ENCODE measurements at regions of chr4 and their contacts with region 1.

Region 1: DNA sequence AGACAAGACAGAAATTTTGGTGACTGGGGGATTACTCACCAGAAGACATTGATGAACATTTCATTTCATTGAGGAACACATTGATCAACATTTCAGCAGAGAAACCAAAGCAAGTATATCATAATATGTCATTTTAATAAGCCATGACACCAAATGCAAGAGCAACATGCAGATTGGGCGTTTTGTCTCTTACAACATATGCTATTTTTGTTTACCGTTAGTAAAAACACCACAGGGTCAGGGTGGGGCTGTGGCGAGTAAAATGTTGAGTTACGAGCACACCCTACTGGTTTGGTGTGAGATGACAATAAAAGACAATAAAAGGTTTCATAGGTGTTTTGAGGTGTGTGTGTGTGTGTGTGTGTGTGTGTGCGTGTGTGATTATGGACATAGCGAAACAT is 294.5 kb downstream of the PDGFC start:
- DNase-seq: peak; percentile 38
- ATAC-seq: peak; percentile 88
- H3K4me3 ChIP-seq: no peak overlapping the region
- H3K27ac ChIP-seq: no peak overlapping the region
- H3K4me1 ChIP-seq: no peaks in the 10 kb centered on the region
- H3K27me3 ChIP-seq: no peaks in the 10 kb centered on the region
- CTCF ChIP-seq: peak; percentile 65
- EP300 ChIP-seq: no peak
- POLR2A ChIP-seq: no peak
- RAD21 ChIP-seq: no peak

Region 2: GRCh38 chr4:156109949-156110900 is 566.9 kb before region 1 on chr4:
- CTCF ChIA-PET with region 1: no interaction called
- POLR2A ChIA-PET with region 1: no interaction called
- in situ Hi-C with region 1: no loop called
- intact Hi-C with region 1: loop called (anchors 5 kb)
- DNase-seq: no peak
- ATAC-seq: peak; percentile 53; the same call in 1 of the 3 replicates
- H3K4me3 ChIP-seq: no peak overlapping the region
- H3K27ac ChIP-seq: no peak overlapping the region
- H3K4me1 ChIP-seq: no peaks in the 10 kb centered on the region
- H3K27me3 ChIP-seq: no peaks in the 10 kb centered on the region
- CTCF ChIP-seq: no peak
- EP300 ChIP-seq: no peak
- POLR2A ChIP-seq: no peak
- RAD21 ChIP-seq: no peak

Region 3: GRCh38 chr4:156169011-156169410 is 508.1 kb before region 1 on chr4:
- CTCF ChIA-PET with region 1: no interaction called
- POLR2A ChIA-PET with region 1: no interaction called
- in situ Hi-C with region 1: no loop called
- intact Hi-C with region 1: loop called (anchors 1 kb)
- DNase-seq: peak; percentile 3
- ATAC-seq: peak; percentile 66
- H3K4me3 ChIP-seq: no peak overlapping the region
- H3K27ac ChIP-seq: no peak overlapping the region
- H3K4me1 ChIP-seq: no peaks in the 10 kb centered on the region
- H3K27me3 ChIP-seq: no peaks in the 10 kb centered on the region
- CTCF ChIP-seq: peak; percentile 67
- EP300 ChIP-seq: no peak
- POLR2A ChIP-seq: no peak
- RAD21 ChIP-seq: peak; percentile 29; the same call in 1 of the 2 replicates

Region 4: DNA sequence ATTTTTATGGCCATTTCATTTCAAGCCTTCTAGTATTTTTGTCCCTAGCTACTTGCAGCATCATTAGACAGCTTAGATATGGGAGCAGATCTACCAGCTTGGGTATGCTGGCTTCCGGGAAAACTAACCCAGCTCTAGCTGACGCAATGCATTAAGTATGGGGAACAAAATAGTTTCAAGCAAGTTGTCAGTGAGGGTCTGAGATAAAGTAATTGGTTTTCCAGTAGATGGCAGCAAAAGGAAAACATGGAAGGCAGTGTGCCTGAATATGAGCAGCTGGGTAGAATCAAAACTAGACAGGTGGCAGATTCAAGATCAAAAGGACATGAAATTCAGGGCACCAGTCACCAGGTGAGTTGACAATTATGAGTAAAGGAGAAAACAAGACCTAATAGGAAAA is 382.6 kb before region 1 on chr4:
- CTCF ChIA-PET with region 1: no interaction called
- POLR2A ChIA-PET with region 1: no interaction called
- in situ Hi-C with region 1: no loop called
- intact Hi-C with region 1: loop called (anchors 10 kb)
- DNase-seq: peak; percentile 35
- ATAC-seq: peak; percentile 80
- H3K4me3 ChIP-seq: no peak overlapping the region
- H3K27ac ChIP-seq: no peak overlapping the region
- H3K4me1 ChIP-seq: no peaks in the 10 kb centered on the region
- H3K27me3 ChIP-seq: no peaks in the 10 kb centered on the region
- CTCF ChIP-seq: peak; percentile 57
- EP300 ChIP-seq: no peak
- POLR2A ChIP-seq: no peak
- RAD21 ChIP-seq: no peak

Region 5: DNA sequence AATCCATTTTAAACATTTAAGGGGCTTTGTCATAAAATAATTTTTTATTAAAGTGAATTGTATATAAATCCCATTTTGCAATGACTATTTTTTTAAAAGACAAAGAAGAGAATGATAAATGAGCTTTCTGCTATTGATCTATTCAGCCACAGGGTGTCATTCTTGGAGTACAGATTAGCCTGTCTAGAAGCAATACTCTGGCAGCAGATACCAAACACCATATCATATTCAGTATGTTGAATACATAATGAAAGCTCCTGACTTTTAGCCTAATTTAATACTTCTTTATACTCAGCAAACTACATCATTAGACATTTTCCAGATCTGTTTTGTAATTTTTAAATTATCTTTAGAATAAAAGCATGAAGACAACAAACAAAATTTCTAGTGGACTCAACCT is 201.8 kb before region 1 on chr4:
- CTCF ChIA-PET with region 1: interaction called, 4 read pairs
- POLR2A ChIA-PET with region 1: no interaction called
- in situ Hi-C with region 1: loop called (anchors 10 kb)
- intact Hi-C with region 1: loop called (anchors 1 kb)
- DNase-seq: peak; percentile 15
- ATAC-seq: peak; percentile 75
- H3K4me3 ChIP-seq: no peak overlapping the region
- H3K27ac ChIP-seq: no peak overlapping the region
- H3K4me1 ChIP-seq: no peaks in the 10 kb centered on the region
- H3K27me3 ChIP-seq: no peaks in the 10 kb centered on the region
- CTCF ChIP-seq: peak; percentile 51
- EP300 ChIP-seq: no peak
- POLR2A ChIP-seq: no peak
- RAD21 ChIP-seq: no peak

Region 6: GRCh38 chr4:156638925-156639605 is 38.1 kb before region 1 on chr4:
- CTCF ChIA-PET with region 1: no interaction called
- POLR2A ChIA-PET with region 1: no interaction called
- in situ Hi-C with region 1: no loop called
- intact Hi-C with region 1: no loop called
- DNase-seq: no peak
- ATAC-seq: no peak
- H3K4me3 ChIP-seq: no peak overlapping the region
- H3K27ac ChIP-seq: no peak overlapping the region
- H3K4me1 ChIP-seq: no peaks in the 10 kb centered on the region
- H3K27me3 ChIP-seq: no peaks in the 10 kb centered on the region
- CTCF ChIP-seq: no peak
- EP300 ChIP-seq: no peak
- POLR2A ChIP-seq: no peak
- RAD21 ChIP-seq: no peak

Region 7: DNA sequence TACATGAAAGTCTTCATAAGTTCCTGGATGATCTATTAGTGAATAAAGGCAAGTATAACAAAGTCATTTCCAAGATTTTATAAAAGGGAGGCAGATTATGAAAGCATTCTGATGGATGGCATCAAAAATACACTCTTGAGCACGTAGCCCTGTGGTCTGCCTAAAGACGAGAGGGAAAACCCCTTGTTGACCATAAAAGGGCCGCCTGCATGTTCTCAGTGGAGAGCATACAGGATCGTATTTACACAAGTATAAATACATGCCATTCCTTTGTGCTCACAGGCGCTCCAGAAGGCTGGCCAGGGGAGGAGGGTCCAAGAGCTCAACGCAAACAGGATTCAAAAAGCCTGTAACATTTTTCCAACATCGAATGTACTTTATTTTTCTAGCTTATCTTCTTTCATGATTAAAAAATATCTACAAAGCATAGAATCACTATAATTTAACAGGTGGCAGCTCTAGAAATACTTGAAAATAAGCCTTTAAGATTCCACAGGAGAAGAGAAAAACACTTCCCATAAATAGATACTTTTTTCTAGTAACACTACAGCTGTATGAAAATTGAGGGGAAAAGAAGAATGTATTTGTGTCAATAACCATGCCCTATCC is 264.9 kb after region 1 on chr4:
- CTCF ChIA-PET with region 1: no interaction called
- POLR2A ChIA-PET with region 1: no interaction called
- in situ Hi-C with region 1: no loop called
- intact Hi-C with region 1: no loop called
- DNase-seq: peak; percentile 98
- ATAC-seq: peak; percentile 100
- H3K4me3 ChIP-seq: peak overlapping the region in 2 of 3 experiments; percentile 57; a peak in 2 of 6 replicates
- H3K27ac ChIP-seq: peak overlapping the region; percentile 91
- H3K4me1 ChIP-seq: peaks cover 44% of the 10 kb centered on the region
- H3K27me3 ChIP-seq: no peaks in the 10 kb centered on the region
- CTCF ChIP-seq: no peak
- EP300 ChIP-seq: peak; percentile 26 to 85; a peak in 2 of 4 replicates
- POLR2A ChIP-seq: no peak
- RAD21 ChIP-seq: no peak

Region 8: GRCh38 chr4:157045507-157046127 is 368.5 kb after region 1 on chr4:
- CTCF ChIA-PET with region 1: no interaction called
- POLR2A ChIA-PET with region 1: no interaction called
- in situ Hi-C with region 1: no loop called
- intact Hi-C with region 1: loop called (anchors 10 kb)
- DNase-seq: peak; percentile 47
- ATAC-seq: peak; percentile 96
- H3K4me3 ChIP-seq: no peak overlapping the region
- H3K27ac ChIP-seq: no peak overlapping the region
- H3K4me1 ChIP-seq: no peaks in the 10 kb centered on the region
- H3K27me3 ChIP-seq: 0 out of 5 replicates have a peak, but pooled peaks cover 0 to 3% of the 10 kb centered on the region in 2 experiments
- CTCF ChIP-seq: peak; percentile 83
- EP300 ChIP-seq: no peak
- POLR2A ChIP-seq: no peak
- RAD21 ChIP-seq: peak; percentile 53; the same call in 1 of the 2 replicates